Activated naive CD4-positive, alpha-beta T cell treated with anti-CD3 and anti-CD28 coated beads for 36 hours (primary cell): ENCODE measurements at regions of chr1 and their contacts with region 1.

Region 1: GRCh38 chr1:61049850-61050540 is 32.4 kb upstream of the NFIA start:
- DNase-seq: peak; percentile 93
- H3K4me3 Mint-ChIP-seq: peak overlapping the region; percentile 74
- H3K27ac Mint-ChIP-seq: no peak overlapping the region
- H3K4me1 Mint-ChIP-seq: peaks cover 28% of the 10 kb centered on the region
- H3K27me3 Mint-ChIP-seq: peaks cover 42% of the 10 kb centered on the region

Region 2: GRCh38 chr1:60149251-60149650 is 900.7 kb before region 1 on chr1:
- CTCF ChIA-PET with region 1: no interaction called
- intact Hi-C with region 1: loop called (anchors 10 kb)
- DNase-seq: no peak
- H3K4me3 Mint-ChIP-seq: no peak overlapping the region
- H3K27ac Mint-ChIP-seq: no peak overlapping the region
- H3K4me1 Mint-ChIP-seq: no peaks in the 10 kb centered on the region
- H3K27me3 Mint-ChIP-seq: peaks cover 10% of the 10 kb centered on the region

Region 3: DNA sequence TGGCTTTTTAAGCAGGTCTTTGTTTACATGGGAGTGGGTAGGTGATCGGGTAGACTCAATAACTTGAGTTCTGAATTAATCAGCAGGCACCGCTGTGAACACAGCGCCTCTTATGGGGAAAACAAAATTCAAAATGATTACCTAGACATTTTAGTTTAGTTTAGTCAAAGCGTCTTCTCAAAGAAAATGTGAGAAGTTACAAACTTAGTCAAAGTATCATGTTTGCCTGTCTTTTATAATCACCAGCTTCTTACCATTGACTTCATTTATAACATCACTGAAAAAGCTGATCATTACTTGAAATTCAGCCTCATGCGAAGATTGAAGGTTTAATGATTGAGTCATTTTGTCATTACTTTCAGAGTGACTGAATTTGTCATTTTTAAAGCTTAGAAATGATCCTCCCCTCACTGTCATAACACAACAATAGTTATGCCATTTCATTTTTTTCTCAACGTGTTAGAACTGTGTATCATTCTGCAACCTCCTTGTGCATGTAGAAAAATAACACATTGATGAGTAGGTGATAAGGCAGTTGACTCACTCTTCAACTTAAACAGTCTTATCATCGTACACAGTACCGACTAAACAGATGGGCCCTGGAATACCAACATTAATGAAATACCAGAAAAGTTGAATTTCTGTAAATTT is 220.9 kb after region 1 on chr1:
- CTCF ChIA-PET with region 1: interaction called, 3 read pairs
- intact Hi-C with region 1: loop called (anchors 5 kb)
- DNase-seq: peak; percentile 24
- H3K4me3 Mint-ChIP-seq: no peak overlapping the region
- H3K27ac Mint-ChIP-seq: peak overlapping the region; percentile 37
- H3K4me1 Mint-ChIP-seq: peaks cover 18% of the 10 kb centered on the region
- H3K27me3 Mint-ChIP-seq: peaks cover 7% of the 10 kb centered on the region

Region 4: DNA sequence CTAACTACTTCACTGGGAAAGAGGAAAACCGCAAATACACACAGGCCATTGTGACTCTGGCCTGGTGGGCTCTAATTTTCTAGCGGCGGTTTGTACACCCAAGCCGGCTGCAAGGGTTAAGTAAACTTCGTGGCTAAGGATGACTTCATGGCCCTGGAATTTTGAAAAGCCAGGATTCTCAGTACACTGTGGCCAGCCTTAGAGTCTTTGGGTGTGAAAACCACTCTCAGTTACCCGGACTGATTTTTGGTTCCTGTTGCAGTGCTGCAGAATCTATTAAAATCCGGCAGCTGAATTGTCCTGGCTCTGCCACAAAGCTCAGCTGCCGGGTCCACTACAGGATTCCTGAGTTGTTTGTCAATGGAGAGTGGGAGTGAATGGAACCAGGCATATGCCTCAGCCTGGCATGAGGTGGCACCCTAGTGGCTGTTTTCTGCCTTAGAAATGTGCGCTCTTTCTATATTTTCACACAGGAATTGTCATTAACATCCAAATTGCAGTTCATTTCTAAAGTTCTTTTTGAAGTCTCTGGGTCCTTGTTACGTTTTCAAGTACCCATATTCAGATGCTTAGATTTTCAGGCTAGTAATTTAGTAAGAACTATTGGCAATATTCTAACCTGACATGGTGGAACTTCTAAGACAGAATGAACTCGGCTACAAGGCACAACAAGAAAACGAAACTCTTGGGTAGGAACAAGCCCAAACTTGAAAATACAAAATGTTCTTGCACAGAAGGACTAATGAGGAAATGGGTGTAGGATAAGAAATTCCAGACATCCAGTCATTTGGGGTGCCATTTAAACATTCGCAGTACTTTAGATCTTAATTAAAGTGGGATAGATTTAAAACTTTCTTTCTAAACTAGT is 288.2 kb after region 1 on chr1:
- CTCF ChIA-PET with region 1: interaction called, 4 read pairs
- intact Hi-C with region 1: loop called (anchors 1 kb)
- DNase-seq: no peak
- H3K4me3 Mint-ChIP-seq: no peak overlapping the region
- H3K27ac Mint-ChIP-seq: no peak overlapping the region
- H3K4me1 Mint-ChIP-seq: no peaks in the 10 kb centered on the region
- H3K27me3 Mint-ChIP-seq: peaks cover under 1% of the 10 kb centered on the region

Region 5: GRCh38 chr1:61641578-61642336 is 591.8 kb after region 1 on chr1:
- CTCF ChIA-PET with region 1: no interaction called
- intact Hi-C with region 1: loop called (anchors 2 kb)
- DNase-seq: peak; percentile 84
- H3K4me3 Mint-ChIP-seq: peak overlapping the region; percentile 68
- H3K27ac Mint-ChIP-seq: peak overlapping the region; percentile 38
- H3K4me1 Mint-ChIP-seq: peaks cover 10% of the 10 kb centered on the region
- H3K27me3 Mint-ChIP-seq: peaks cover 3% of the 10 kb centered on the region